MCF 10A (cell line): ENCODE measurements at regions of chr18 and their contacts with region 1.

Region 1: GRCh38 chr18:21914739-21915319 is 174.2 kb downstream of the MIB1 start:
- DNase-seq: peak; percentile 53
- H3K4me3 Mint-ChIP-seq: no peak overlapping the region
- H3K27ac Mint-ChIP-seq: no peak overlapping the region
- H3K4me1 Mint-ChIP-seq: peaks cover 6% of the 10 kb centered on the region
- H3K27me3 Mint-ChIP-seq: no peaks in the 10 kb centered on the region
- CTCF ChIP-seq: peak; percentile 55

Region 2: DNA sequence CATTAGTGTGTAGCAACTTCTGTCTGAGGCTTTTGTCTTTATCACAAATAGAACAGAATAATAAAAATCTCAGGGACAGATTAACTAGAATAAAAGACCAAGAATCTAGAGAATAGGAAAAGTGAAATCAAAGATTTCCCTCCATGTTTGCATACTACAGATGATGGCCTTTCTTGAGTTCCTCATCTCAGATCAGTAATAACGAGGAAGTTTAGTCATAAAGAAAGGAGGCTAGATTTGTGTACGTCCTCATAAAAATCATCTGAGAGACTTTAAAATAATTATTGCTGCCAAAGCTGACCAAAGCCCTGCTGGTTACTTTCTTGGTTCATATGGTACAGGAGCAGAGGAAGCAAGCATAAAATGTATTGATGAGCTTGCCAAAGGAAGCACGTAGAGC is 57.0 kb before region 1 on chr18:
- CTCF ChIA-PET with region 1: no interaction called
- POLR2A ChIA-PET with region 1: no interaction called
- intact Hi-C with region 1: no loop called
- DNase-seq: no peak
- H3K4me3 Mint-ChIP-seq: no peak overlapping the region
- H3K27ac Mint-ChIP-seq: no peak overlapping the region
- H3K4me1 Mint-ChIP-seq: no peaks in the 10 kb centered on the region
- H3K27me3 Mint-ChIP-seq: no peaks in the 10 kb centered on the region
- CTCF ChIP-seq: no peak

Region 3: DNA sequence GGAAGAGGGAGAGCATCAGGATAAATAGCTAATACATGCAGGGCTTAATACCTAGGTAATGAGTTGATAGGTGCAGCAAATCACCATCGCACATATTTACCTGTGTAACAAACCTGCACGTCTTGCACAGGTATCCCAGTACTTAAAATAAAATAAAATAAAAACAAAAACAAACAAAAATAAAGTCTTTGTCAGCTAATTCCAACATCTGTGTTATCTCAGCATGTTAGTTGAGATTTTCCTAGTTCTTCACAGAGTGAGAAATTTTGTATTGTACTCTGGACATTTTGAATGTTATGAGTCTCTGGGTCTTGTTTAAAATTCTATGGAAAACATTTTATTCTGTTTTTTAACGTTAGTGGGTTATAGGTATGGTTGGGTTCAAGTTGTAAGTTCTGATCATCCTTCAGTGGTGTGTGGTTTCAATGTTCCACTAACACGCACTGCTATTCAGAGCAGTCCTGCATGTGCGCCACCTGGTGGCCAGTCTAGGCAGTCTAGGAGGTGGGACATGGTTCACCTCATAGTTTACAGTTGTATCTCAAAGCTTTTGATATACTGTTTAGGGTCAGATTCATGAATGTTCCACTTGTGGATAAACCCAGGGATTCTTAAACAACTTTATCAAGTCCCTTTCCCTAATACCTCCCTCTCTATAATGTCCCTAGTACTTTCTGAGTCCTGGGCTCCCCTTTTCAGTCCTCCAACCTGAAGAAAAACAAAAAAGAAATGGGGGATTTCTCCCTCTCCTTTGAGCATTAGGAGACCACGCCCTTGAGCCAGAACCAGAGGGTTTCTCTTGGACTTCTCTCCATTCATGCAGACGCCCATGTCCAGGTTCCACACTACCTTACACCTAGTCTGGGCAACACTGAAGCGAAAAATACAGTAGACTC is 41.2 kb after region 1 on chr18:
- CTCF ChIA-PET with region 1: interaction called, 4 read pairs
- POLR2A ChIA-PET with region 1: no interaction called
- intact Hi-C with region 1: loop called (anchors 2 kb)
- DNase-seq: peak; percentile 78
- H3K4me3 Mint-ChIP-seq: no peak overlapping the region
- H3K27ac Mint-ChIP-seq: no peak overlapping the region
- H3K4me1 Mint-ChIP-seq: peaks cover 6% of the 10 kb centered on the region
- H3K27me3 Mint-ChIP-seq: peaks cover 16% of the 10 kb centered on the region
- CTCF ChIP-seq: peak; percentile 83

Region 4: DNA sequence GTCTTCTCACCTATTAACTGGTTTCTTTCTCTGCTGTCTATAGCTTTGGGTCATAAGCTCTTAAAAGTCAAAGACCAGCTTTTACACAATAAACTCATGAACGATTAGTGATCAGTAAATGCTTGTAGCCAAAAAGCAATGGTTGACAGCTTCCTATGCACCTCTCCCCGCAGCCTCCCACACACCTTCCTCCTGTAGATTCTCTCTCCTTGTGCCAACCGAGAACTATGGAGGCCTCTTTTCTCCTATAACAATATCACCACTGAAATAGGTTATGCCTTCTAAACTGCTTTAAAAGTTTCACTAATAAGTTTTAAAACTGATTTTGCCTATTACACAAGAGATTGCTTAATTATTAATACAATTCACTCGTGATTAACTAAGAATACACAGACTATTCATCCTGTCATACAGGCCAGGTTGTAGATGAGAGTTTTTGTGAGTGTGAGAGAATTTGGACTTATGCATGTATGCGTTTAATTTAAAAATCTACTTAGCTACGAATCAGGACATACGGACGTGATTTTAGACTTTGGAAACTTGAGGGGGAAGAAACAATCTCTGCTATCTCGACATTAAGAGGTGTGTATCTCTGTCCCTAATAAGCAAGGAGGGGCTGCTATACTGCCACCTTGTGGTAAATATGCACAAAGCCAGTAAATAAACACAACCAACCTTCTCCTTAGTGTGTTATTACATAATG is 789.2 kb after region 1 on chr18:
- CTCF ChIA-PET with region 1: interaction called, 3 read pairs
- POLR2A ChIA-PET with region 1: no interaction called
- intact Hi-C with region 1: loop called (anchors 5 kb)
- DNase-seq: peak; percentile 76
- H3K4me3 Mint-ChIP-seq: no peak overlapping the region
- H3K27ac Mint-ChIP-seq: no peak overlapping the region
- H3K4me1 Mint-ChIP-seq: no peaks in the 10 kb centered on the region
- H3K27me3 Mint-ChIP-seq: no peaks in the 10 kb centered on the region
- CTCF ChIP-seq: peak; percentile 74

Region 5: GRCh38 chr18:22800551-22800951 is 885.7 kb after region 1 on chr18:
- CTCF ChIA-PET with region 1: no interaction called
- POLR2A ChIA-PET with region 1: interaction called, 3 read pairs
- intact Hi-C with region 1: loop called (anchors 1 kb)
- DNase-seq: no peak
- H3K4me3 Mint-ChIP-seq: no peak overlapping the region
- H3K27ac Mint-ChIP-seq: no peak overlapping the region
- H3K4me1 Mint-ChIP-seq: peaks cover 8% of the 10 kb centered on the region
- H3K27me3 Mint-ChIP-seq: no peaks in the 10 kb centered on the region
- CTCF ChIP-seq: no peak

Region 6: GRCh38 chr18:23416298-23416697 is 1501.5 kb after region 1 on chr18:
- CTCF ChIA-PET with region 1: no interaction called
- POLR2A ChIA-PET with region 1: no interaction called
- intact Hi-C with region 1: loop called (anchors 10 kb)
- DNase-seq: no peak
- H3K4me3 Mint-ChIP-seq: no peak overlapping the region
- H3K27ac Mint-ChIP-seq: no peak overlapping the region
- H3K4me1 Mint-ChIP-seq: no peaks in the 10 kb centered on the region
- H3K27me3 Mint-ChIP-seq: no peaks in the 10 kb centered on the region
- CTCF ChIP-seq: no peak